ENCODE measurements at regions of chr16 and their contacts with region 1.

Region 1: DNA sequence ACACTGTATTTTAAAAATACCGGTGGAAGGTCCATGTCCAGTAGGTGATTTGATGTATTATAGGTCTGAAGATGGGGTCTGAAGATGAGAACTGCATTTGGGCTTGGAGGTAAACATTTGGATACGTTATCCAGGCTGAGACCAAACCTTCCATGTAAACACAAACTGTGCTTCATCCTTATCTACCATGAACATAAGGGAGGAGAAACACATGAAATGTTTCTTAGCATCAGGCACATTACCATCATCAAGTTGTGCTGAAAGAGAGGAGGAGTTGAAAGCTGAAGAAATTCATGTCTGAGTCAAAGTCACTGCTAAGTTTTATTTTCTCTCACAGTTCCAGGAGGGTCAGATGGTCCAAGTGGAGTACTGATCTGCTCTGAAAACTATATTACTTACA is 11.4 kb downstream of the SF3B3 start:
- DNase-seq: no peak
- H3K4me3 Mint-ChIP-seq: no peak overlapping the region
- H3K27ac Mint-ChIP-seq: peak overlapping the region; percentile 23
- H3K4me1 Mint-ChIP-seq: peaks cover 46% of the 10 kb centered on the region
- H3K27me3 Mint-ChIP-seq: no peaks in the 10 kb centered on the region

Region 2: DNA sequence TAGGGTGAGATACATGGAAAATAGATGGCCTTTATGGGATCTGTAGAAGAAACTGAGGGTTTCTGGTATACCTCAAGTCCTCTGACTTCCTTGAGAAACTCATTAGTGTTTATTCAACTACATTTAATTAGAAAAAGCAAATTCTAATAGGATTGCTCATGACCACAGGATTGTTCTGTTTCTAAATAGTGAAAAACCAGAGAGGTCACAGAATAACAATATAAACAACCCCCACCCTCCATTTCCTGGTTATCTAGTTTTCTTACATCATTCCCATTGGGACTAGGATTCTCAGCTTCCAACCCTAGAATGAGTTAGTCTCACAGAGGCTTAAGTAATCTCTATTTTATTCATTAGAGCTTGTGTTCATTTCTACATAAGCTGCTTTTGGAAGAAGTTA is 18.7 kb after region 1 on chr16:
- intact Hi-C with region 1: no loop called
- DNase-seq: no peak
- H3K4me3 Mint-ChIP-seq: no peak overlapping the region
- H3K27ac Mint-ChIP-seq: no peak overlapping the region
- H3K4me1 Mint-ChIP-seq: peaks cover 14% of the 10 kb centered on the region
- H3K27me3 Mint-ChIP-seq: no peaks in the 10 kb centered on the region

Region 3: GRCh38 chr16:70576431-70577255 is 41.7 kb after region 1 on chr16:
- intact Hi-C with region 1: loop called (anchors 5 kb)
- DNase-seq: no peak
- H3K4me3 Mint-ChIP-seq: no peak overlapping the region
- H3K27ac Mint-ChIP-seq: peak overlapping the region; percentile 10
- H3K4me1 Mint-ChIP-seq: peaks cover 17% of the 10 kb centered on the region
- H3K27me3 Mint-ChIP-seq: no peaks in the 10 kb centered on the region

Measured in activated T-helper 1 cell treated with anti-CD3 and anti-CD28 coated beads, Interleukin-12 subunit alpha, Interleukin-12 subunit beta, Interleukin-2, Interleukin-4 antibody, amounts not matched to agents 30 ng/mL and 10 ng/mL and 1 ng/mL, durations not matched to agents 14 hours and 24 hours and 36 hours (primary cell).